ENCODE measurements at regions of chr10 and their contacts with region 1.

Region 1: DNA sequence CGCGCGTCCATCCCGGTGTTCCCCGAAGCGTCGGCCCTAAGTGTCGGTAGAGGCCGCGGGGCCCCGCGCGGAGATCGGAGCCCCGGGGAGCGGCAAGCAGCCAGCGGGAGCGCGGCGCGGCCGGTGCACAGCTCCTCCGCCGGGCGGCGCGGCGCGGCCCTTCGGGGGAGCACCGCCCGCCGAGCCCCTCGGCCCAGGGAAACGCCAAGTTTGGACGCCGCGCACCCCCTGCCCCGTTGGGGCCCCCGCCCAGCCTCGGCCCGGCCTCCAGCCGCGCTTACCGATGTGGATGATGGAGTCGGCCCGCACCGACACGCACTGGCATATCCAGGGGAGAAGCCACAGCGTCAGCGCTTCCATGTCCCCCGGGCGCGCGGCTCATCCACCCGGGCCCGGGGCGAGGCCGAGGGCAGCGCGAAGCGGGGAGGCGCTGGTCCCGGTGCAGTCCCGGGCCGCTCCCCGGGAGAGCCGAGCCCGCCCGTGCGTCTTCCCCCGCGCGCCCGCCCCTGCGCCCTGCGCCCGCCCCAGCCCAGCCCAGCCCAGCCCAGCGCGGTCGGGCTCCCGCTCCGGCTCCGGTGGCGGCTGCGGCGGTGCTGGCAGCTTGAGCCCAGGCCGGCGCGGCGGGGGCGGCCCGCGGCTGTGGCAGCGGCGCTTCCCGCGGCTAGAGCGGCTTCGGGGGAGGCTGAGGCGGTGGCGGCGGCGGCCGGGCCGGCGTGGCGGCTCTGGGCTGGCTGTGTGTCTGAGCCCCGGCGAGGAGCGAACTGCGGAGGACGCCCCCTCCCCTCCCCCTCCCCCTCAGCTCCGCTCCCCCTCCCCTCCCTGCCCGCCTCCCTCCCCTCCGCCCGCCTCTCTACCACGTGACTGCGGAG is at the start of gene GRID1:
- DNase-seq: peak; percentile 26 to 84 (median 68)
- H3K4me3 ChIP-seq: peak within 1 kb of the TSS; percentile 56 to 91 (median 80)
- H3K27ac ChIP-seq: peak within 1 kb of the TSS; percentile 78 to 99 (median 94)
- H3K27me3 ChIP-seq: peaks cover 0 to 3% (median 0%) of the 10 kb centered on the region in 45 donors
- CTCF ChIP-seq: peak in 24 of 56 donors; percentile 2 to 49 (median 24)
- total RNA-seq, gene GRID1: 34.8 to 69.0 (median 50.5) TPM

Region 2: GRCh38 chr10:85995791-85996190 is 370.5 kb before region 1 on chr10:
- intact Hi-C with region 1: loop called in 1 of 2 experiments (anchors 5 kb)
- DNase-seq: peak in 4 of 10 donors; percentile 14 to 61 (median 56)
- H3K4me3 ChIP-seq: no peak overlapping the region
- H3K27ac ChIP-seq: peak overlapping the region in 1 of 59 donors; percentile 19
- H3K27me3 ChIP-seq: no peaks in the 10 kb centered on the region
- CTCF ChIP-seq: peak in 54 of 56 donors; percentile 23 to 74 (median 58)

Region 3: GRCh38 chr10:86182150-86182549 is 184.1 kb before region 1 on chr10:
- intact Hi-C with region 1: loop called (anchors 5 kb)
- DNase-seq: peak; percentile 32 to 89 (median 86)
- H3K4me3 ChIP-seq: peak overlapping the region in 34 of 59 donors; percentile 2 to 47 (median 22)
- H3K27ac ChIP-seq: peak overlapping the region in 57 of 59 donors; percentile 3 to 90 (median 74)
- H3K27me3 ChIP-seq: no peaks in the 10 kb centered on the region
- CTCF ChIP-seq: peak; percentile 37 to 86 (median 67)

Region 4: DNA sequence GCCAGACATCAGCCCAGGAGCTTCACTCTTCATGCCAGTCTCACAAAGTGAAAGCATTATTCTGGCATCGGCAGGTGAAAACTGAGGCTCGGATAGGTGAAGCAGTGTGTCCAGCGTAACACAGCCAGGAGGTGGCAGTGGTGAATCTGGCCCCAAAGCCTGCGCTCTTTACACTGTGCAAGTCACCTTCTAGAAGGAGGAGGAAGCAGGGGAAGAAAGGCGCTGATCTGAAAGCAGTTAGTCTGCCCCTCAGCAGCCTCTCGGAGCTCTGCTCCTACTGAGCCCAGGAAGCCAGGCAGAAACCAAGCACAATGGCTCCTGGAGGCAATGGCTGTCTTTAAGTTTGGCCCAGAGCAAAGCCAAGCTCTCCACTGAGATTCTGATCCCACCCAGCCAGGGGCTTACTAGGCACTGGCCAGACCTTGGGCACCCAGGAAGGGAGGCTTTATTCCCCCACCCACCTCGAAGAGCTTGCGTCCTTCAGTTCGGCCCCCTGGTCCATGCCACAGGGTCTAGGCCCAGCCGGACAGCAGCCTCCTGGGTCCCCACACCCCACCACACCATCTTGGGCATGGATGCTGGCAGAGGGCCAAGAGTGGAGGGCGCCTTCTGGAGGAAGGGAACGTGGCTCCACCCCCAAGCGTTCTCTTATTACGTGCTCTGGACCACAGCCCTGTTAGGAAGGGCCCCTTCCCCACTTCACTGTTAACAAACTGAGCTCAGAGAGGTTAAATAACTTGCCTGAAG is 104.2 kb before region 1 on chr10:
- intact Hi-C with region 1: loop called (anchors 2 to 5 kb)
- DNase-seq: peak in 7 of 10 donors; percentile 2 to 73 (median 55)
- H3K4me3 ChIP-seq: peak overlapping the region in 56 of 59 donors; percentile 0 to 64 (median 36)
- H3K27ac ChIP-seq: peak overlapping the region; percentile 78 to 99 (median 95)
- H3K27me3 ChIP-seq: no peaks in the 10 kb centered on the region
- CTCF ChIP-seq: peak in 51 of 56 donors; percentile 3 to 66 (median 49)